ENCODE measurements at regions of chr17 and their contacts with region 1.

Region 1: DNA sequence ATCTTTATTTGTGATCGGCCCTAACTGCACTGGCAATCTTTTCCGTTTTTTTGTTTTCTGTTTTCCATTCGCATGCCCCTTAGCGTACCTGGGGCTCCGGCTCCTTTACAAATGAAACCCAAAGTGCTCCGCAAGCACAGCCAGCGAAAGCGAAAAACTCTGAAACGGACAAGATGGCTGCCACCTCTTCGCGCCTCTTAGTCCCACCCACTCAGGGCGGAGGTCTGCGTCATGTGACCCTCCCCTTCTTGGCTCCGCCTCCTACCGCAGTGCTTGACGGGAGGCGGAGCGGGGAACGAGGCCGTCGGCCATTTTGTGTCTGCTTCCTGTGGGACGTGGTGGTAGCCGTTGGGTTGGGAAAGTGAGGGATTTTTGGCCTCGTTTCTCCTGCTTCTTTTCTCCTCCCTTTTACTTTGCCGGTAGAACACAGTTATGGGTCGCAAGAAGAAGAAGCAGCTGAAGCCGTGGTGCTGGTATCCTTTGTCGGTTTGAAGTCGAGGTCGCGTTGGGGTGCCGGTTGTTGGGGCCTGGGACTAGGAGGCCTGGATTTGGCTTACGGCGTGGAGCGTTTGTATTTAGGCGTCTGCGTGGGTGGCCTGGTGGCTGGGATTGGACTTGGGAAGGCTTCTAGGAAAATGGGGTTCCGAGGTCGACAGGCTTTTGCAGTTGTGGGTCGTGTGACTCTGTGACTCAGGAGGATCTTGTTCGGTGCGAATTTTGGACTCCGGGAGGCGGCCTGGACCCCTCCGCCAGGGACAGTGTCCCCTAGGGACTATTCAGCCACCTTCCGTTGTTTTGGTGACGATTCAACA is at the start of gene ZNF207:
- DNase-seq: peak; percentile 97
- H3K4me3 Mint-ChIP-seq: peak within 1 kb of the TSS; percentile 99
- H3K27ac Mint-ChIP-seq: peak within 1 kb of the TSS; percentile 100
- H3K4me1 Mint-ChIP-seq: peaks cover 25% of the 10 kb centered on the region
- H3K27me3 Mint-ChIP-seq: no peaks in the 10 kb centered on the region
- total RNA-seq, gene ZNF207: 192 to 209 TPM

Region 2: GRCh38 chr17:32275060-32276042 is 74.7 kb before region 1 on chr17:
- CTCF ChIA-PET with region 1: no interaction called
- POLR2A ChIA-PET with region 1: no interaction called
- intact Hi-C with region 1: no loop called
- DNase-seq: peak; percentile 19
- H3K4me3 Mint-ChIP-seq: no peak overlapping the region
- H3K27ac Mint-ChIP-seq: no peak overlapping the region
- H3K4me1 Mint-ChIP-seq: no peaks in the 10 kb centered on the region
- H3K27me3 Mint-ChIP-seq: peaks cover 9% of the 10 kb centered on the region

Region 3: DNA sequence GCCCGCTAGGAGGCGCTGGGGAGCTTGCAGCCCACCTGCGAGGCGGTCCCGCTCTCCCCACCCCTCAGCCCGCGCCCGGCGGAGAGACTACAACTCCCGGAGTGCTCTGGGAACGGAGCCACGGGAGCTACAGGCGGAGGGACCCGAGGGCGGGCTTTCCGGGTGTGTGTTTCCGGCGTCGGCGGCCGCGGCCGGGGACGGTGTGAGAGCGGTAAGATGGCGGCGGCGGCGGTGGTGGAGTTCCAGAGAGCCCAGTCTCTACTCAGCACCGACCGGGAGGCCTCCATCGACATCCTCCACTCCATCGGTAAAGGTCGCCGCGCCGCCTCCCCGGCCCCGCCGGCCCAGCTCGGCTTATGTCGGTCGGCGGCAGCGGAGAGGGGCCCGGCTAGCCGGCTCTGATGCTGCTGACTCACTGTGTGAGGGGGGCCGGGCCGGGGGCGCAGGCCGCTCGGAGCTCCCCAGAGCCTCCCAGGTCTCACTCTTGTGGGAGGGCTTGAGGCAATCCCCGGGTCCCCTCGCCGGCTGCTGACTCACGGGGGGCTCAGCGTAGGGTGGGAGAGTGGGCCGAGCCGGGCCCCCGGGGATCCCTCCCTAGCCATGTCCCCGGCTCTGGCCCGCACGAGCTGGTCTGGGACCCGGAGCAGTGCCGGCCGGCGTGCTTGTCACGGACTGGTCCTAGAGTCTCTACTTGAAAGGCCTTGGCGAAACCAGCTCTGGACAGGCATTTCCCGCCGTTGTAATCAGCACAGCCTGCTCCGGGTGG is 94.4 kb after region 1 on chr17 and contains the start of gene PSMD11:
- CTCF ChIA-PET with region 1: interaction called, 10 read pairs
- POLR2A ChIA-PET with region 1: interaction called, 6 read pairs
- intact Hi-C with region 1: loop called (anchors 1 kb)
- DNase-seq: peak; percentile 99
- H3K4me3 Mint-ChIP-seq: peak within 1 kb of the TSS; percentile 89
- H3K27ac Mint-ChIP-seq: peak within 1 kb of the TSS; percentile 91
- H3K4me1 Mint-ChIP-seq: peaks cover 49% of the 10 kb centered on the region
- H3K27me3 Mint-ChIP-seq: no peaks in the 10 kb centered on the region
- total RNA-seq, gene PSMD11: 161 to 162 TPM

Measured in activated CD4-positive, alpha-beta memory T cell treated with anti-CD3 and anti-CD28 coated beads for 36 hours (primary cell).